A549 (cell line): ENCODE measurements at regions of chr17 and their contacts with region 1.

Region 1: DNA sequence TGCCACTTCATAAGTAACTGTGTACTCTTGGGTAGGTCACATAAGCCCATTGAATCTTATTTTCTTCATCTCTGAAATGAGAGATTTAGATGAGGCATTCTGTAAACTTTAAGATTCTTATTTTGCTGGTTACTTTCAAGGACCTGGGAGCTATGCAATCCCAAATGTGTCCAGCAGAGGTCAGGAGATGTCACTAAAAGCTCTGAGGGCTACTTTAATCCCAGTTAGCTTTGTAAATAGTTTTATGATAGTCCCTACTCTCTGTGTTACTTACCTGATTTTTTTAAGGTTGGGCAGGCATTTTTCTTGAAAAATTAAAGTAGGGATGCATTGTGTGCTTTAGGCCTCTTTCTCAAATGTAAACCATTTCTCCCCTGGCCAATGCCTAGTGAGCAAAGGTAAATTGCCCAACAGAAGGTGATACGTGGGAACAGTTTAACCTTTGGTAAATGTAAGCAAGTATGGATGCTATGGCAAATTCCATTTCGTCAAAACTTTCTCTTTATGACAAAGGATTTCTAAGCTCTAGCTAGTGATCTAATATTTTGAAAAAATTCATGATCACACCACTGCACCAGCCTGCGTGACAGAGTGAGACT is 57.1 kb upstream of the WSB1 start:
- DNase-seq: peak; percentile 78 to 79
- ATAC-seq: peak; percentile 70 to 80; a peak in 4 of 6 replicates
- H3K4me3 ChIP-seq: no peak overlapping the region
- H3K27ac ChIP-seq: peak overlapping the region; percentile 2 to 31; a peak in 4 of 6 replicates
- H3K4me1 ChIP-seq: peaks cover 24% of the 10 kb centered on the region
- CTCF ChIP-seq: peak; percentile 96
- EP300 ChIP-seq: no peak
- POLR2A ChIP-seq: no peak
- RAD21 ChIP-seq: peak; percentile 93 to 96

Region 2: GRCh38 chr17:27199948-27200347 is 36.9 kb before region 1 on chr17:
- CTCF ChIA-PET with region 1: interaction called, 48 read pairs
- POLR2A ChIA-PET with region 1: no interaction called
- DNase-seq: no peak
- ATAC-seq: no peak
- H3K4me3 ChIP-seq: no peak overlapping the region
- H3K27ac ChIP-seq: no peak overlapping the region
- H3K4me1 ChIP-seq: no peaks in the 10 kb centered on the region
- CTCF ChIP-seq: no peak
- EP300 ChIP-seq: no peak
- POLR2A ChIP-seq: no peak
- RAD21 ChIP-seq: no peak

Region 3: GRCh38 chr17:27256225-27257030 is 19.6 kb after region 1 on chr17:
- CTCF ChIA-PET with region 1: interaction called, 29 read pairs
- POLR2A ChIA-PET with region 1: no interaction called
- DNase-seq: peak in 1 of 2 experiments; percentile 84
- ATAC-seq: peak; percentile 62 to 94
- H3K4me3 ChIP-seq: no peak overlapping the region
- H3K27ac ChIP-seq: peak overlapping the region; percentile 51 to 53
- H3K4me1 ChIP-seq: peaks cover 20% of the 10 kb centered on the region
- CTCF ChIP-seq: no peak
- EP300 ChIP-seq: 0 out of 5 replicates have a peak, but pooled peaks of 1 of the 2 experiments have one; percentile 12
- POLR2A ChIP-seq: no peak
- RAD21 ChIP-seq: no peak

Region 4: DNA sequence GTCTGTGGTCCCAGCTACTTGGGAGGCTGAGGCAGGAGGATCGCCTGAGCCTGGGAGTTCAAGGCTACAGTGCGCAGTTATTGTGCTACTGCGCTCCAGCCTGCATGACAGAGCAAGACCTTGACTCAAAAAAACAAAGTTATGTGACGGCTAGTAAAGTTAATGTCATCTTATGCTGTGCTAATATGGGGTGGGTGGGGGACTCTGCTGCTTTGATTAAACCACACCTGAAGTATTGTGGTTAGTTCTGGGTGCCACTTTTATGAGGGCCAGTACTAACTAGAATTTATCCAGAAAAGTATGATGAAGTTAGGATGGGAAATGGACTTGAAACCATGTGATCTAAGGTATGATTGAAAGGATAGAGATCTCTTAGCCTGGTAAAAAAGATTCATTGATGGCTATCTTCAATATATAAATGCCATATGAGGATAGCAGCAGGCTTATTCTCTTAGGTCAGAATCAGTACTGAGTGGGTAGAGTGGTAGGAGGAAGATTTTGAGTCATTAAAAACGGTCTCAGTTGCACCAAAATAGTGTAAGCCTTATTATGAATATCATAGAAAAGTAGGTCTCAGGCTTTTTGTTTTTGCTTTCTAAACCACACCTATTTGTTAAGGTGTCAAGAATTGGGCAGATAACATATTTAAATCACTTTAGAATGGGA is 62.7 kb after region 1 on chr17:
- CTCF ChIA-PET with region 1: interaction called, 61 read pairs
- POLR2A ChIA-PET with region 1: interaction called, 37 read pairs
- DNase-seq: no peak
- ATAC-seq: no peak
- H3K4me3 ChIP-seq: no peak overlapping the region
- H3K27ac ChIP-seq: no peak overlapping the region
- H3K4me1 ChIP-seq: peaks cover 37% of the 10 kb centered on the region
- CTCF ChIP-seq: no peak
- EP300 ChIP-seq: no peak
- POLR2A ChIP-seq: no peak
- RAD21 ChIP-seq: no peak

Region 5: GRCh38 chr17:27323524-27324206 is 86.8 kb after region 1 on chr17:
- CTCF ChIA-PET with region 1: interaction called, 306 read pairs
- POLR2A ChIA-PET with region 1: no interaction called
- DNase-seq: peak in 1 of 2 experiments; percentile 69
- ATAC-seq: peak; percentile 31 to 70; a peak in 5 of 6 replicates
- H3K4me3 ChIP-seq: no peak overlapping the region
- H3K27ac ChIP-seq: peak overlapping the region in 1 of 2 experiments; percentile 12; a peak in 2 of 6 replicates
- H3K4me1 ChIP-seq: peaks cover 11% of the 10 kb centered on the region; the same call in 2 of the 3 replicates
- CTCF ChIP-seq: no peak
- EP300 ChIP-seq: no peak
- POLR2A ChIP-seq: no peak
- RAD21 ChIP-seq: no peak

Region 6: GRCh38 chr17:27381007-27381501 is 144.2 kb after region 1 on chr17:
- CTCF ChIA-PET with region 1: interaction called, 18 read pairs
- POLR2A ChIA-PET with region 1: no interaction called
- DNase-seq: peak; percentile 78 to 90
- ATAC-seq: peak; percentile 73 to 92
- H3K4me3 ChIP-seq: no peak overlapping the region; the same call in 2 of the 3 replicates
- H3K27ac ChIP-seq: peak overlapping the region in 1 of 2 experiments; percentile 71; a peak in 3 of 6 replicates
- H3K4me1 ChIP-seq: peaks cover 33% of the 10 kb centered on the region
- CTCF ChIP-seq: peak; percentile 96
- EP300 ChIP-seq: no peak
- POLR2A ChIP-seq: no peak
- RAD21 ChIP-seq: peak; percentile 62 to 66

Region 7: GRCh38 chr17:27494192-27495091 is 257.6 kb after region 1 on chr17:
- CTCF ChIA-PET with region 1: interaction called, 10 read pairs
- POLR2A ChIA-PET with region 1: no interaction called
- DNase-seq: peak; percentile 71 to 83
- ATAC-seq: peak; percentile 80 to 83
- H3K4me3 ChIP-seq: peak overlapping the region; percentile 24
- H3K27ac ChIP-seq: peak overlapping the region; percentile 84 to 89
- H3K4me1 ChIP-seq: peaks cover 65% of the 10 kb centered on the region
- CTCF ChIP-seq: peak; percentile 82
- EP300 ChIP-seq: no peak
- POLR2A ChIP-seq: no peak
- RAD21 ChIP-seq: peak; percentile 83 to 88